Sigmoid colon (tissue), 7 donors: ENCODE measurements at regions of chr1 and their contacts with region 1.

Region 1: DNA sequence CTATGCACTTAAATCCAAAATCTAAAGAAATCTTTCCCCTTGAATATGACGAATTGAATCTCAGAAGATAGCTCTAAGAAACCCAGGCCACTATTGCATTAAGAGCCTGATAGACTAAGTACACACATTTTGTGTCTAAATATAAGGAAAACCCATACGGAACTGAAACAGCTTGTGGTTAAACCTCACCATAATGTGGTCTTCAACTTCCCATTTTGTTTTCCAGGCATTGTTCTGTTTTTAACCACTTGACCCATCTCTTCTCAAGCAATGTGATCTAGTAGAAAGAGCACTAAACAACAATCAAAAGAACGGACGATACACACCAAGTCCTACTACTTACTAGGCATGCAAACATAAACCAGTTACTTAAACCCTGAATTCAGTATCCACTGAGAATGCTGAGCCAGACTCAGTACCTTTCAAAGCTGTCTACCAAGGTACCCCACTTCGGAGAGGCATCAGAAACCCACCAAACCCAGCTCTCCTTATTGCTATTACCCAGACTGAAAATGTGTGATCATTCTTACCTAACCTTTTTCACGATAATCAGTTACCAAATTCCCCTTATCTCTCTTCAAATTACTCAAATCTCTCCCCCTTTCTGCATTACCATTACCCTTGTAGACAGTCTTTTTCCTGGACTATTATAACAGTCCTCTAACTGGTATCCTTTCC is 12.8 kb downstream of the OTUD7B start:
- DNase-seq: no peak
- H3K4me3 ChIP-seq: no peak overlapping the region
- H3K27ac ChIP-seq: no peak overlapping the region
- H3K4me1 ChIP-seq: peaks cover 0 to 86% (median 62%) of the 10 kb centered on the region in 4 donors
- H3K27me3 ChIP-seq: no peaks in the 10 kb centered on the region
- CTCF ChIP-seq: no peak
- EP300 ChIP-seq: no peak
- POLR2A ChIP-seq: no peak

Region 2: GRCh38 chr1:150034336-150034735 is 36.6 kb after region 1 on chr1:
- intact Hi-C with region 1: loop called (anchors 5 kb)
- DNase-seq: no peak
- H3K4me3 ChIP-seq: no peak overlapping the region
- H3K27ac ChIP-seq: no peak overlapping the region
- H3K4me1 ChIP-seq: no peaks in the 10 kb centered on the region
- H3K27me3 ChIP-seq: no peaks in the 10 kb centered on the region
- CTCF ChIP-seq: no peak
- EP300 ChIP-seq: no peak
- POLR2A ChIP-seq: no peak